ENCODE measurements at regions of chr1 and their contacts with region 1.

Region 1: GRCh38 chr1:62726011-62726442 is 37.8 kb upstream of the DOCK7 start:
- DNase-seq: no peak
- ATAC-seq: no peak
- H3K4me3 ChIP-seq: no peak overlapping the region
- H3K27ac ChIP-seq: no peak overlapping the region
- H3K4me1 ChIP-seq: no peaks in the 10 kb centered on the region
- H3K27me3 ChIP-seq: no peaks in the 10 kb centered on the region
- CTCF ChIP-seq: no peak

Region 2: GRCh38 chr1:62613890-62614289 is 112.1 kb before region 1 on chr1:
- CTCF ChIA-PET with region 1: no interaction called
- POLR2A ChIA-PET with region 1: interaction called, 19 read pairs
- intact Hi-C with region 1: no loop called
- DNase-seq: peak; percentile 33
- ATAC-seq: peak; percentile 62
- H3K4me3 ChIP-seq: no peak overlapping the region
- H3K27ac ChIP-seq: no peak overlapping the region
- H3K4me1 ChIP-seq: peaks cover 9% of the 10 kb centered on the region
- H3K27me3 ChIP-seq: no peaks in the 10 kb centered on the region
- CTCF ChIP-seq: no peak

Region 3: GRCh38 chr1:62693123-62693522 is 32.9 kb before region 1 on chr1:
- CTCF ChIA-PET with region 1: no interaction called
- POLR2A ChIA-PET with region 1: interaction called, 15 read pairs
- intact Hi-C with region 1: no loop called
- DNase-seq: no peak
- ATAC-seq: no peak
- H3K4me3 ChIP-seq: no peak overlapping the region
- H3K27ac ChIP-seq: no peak overlapping the region
- H3K4me1 ChIP-seq: peaks cover 13% of the 10 kb centered on the region
- H3K27me3 ChIP-seq: no peaks in the 10 kb centered on the region
- CTCF ChIP-seq: no peak